ENCODE measurements at regions of chr12 and their contacts with region 1.

Region 1: DNA sequence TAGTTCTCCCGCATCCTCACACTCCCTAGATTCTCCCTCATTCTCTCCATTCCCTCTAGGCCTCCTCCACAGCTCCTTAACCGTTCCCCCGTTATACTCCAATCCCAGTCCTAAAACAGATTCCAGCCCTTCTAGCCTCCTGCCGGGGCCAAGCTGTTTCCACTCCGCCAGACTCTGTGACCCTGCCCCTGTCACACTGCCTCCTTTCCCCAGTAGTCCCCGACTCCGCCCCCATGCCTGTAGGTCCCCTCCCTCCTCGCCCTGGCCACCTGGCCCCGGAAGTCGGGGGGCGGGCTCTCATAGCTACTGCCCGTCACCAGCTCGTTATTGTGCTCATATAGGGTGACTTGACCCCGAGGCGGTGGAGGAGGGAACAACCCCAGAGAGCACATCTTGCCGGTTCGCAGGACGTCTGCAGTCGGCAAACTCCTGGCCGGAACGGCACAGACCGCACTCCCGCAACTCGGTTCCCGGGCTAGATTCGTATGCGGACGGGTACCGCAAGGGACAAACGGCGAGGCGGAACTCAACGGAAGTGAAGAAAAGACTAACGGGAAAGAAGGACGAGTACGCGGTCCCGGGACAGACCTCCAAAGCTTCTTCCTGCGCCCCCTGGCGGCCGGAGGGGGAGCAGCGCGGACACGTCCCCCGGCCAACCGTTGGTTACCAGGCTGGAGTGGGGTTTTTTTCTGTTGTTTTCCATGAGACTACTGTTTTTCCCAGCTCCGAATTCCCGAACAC is at the start of gene AAAS:
- DNase-seq: peak; percentile 76 to 98
- H3K4me3 ChIP-seq: peak within 1 kb of the TSS; percentile 71 to 97 (median 94)
- H3K27ac ChIP-seq: peak within 1 kb of the TSS; percentile 95
- H3K4me1 ChIP-seq: peaks cover 0 to 13% (median 9%) of the 10 kb centered on the region in 4 experiments; a peak in 5 of 7 replicates
- H3K27me3 ChIP-seq: peaks cover 1 to 30% (median 23%) of the 10 kb centered on the region in 4 experiments
- CTCF ChIP-seq: peak; percentile 85 to 99 (median 98)
- EP300 ChIP-seq: no peak
- POLR2A ChIP-seq: peak; percentile 86 to 93
- RAD21 ChIP-seq: peak; percentile 21 to 48; a peak in 2 of 4 replicates
- total RNA-seq, gene AAAS: 66.1 and 68.2 TPM in 2 replicates

Region 2: DNA sequence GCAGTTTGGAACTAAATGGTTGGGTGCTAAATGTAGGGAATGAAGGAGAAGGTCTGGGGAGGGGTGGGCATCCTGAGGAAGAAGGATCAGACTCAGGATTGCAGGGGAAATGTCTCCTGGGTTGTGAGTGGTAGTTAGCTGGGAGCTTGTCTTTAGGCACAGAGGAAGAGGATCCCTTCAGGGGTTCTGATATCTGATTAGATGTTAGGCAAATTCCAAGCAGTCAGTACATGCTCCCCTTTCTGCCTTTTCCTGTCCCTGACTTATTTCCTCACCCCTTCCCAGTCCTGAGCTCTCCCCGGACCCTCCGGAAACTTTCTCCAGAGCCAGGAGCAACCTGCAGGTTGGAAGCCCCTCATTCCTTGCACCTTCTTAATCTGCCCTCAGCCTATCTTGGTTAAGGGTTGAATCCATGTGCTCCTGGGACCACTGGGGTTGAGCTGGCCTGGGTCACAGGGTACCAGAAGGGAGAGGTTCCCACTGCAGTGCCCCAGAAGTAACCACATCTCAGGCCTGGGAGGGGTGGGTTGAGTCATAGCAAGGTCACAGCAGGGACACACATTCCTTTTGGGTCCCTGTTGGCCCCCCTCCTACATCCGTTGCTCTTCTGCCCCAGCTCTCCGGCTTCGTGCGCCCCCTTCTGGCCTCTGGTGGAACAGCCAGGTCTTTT is 222.1 kb before region 1 on chr12:
- CTCF ChIA-PET with region 1: no interaction called
- POLR2A ChIA-PET with region 1: no interaction called
- DNase-seq: peak; percentile 65 to 97
- H3K4me3 ChIP-seq: peak overlapping the region in 2 of 4 experiments; percentile 5 to 85; a peak in 3 of 8 replicates
- H3K27ac ChIP-seq: no peak overlapping the region
- H3K4me1 ChIP-seq: peaks cover 4 to 21% (median 7%) of the 10 kb centered on the region in 4 experiments
- H3K27me3 ChIP-seq: peaks cover 0 to 25% (median 15%) of the 10 kb centered on the region in 4 experiments; a peak in 5 of 7 replicates
- CTCF ChIP-seq: peak; percentile 82 to 87 (median 86)
- EP300 ChIP-seq: no peak
- POLR2A ChIP-seq: no peak
- RAD21 ChIP-seq: peak; percentile 79 to 81

Region 3: GRCh38 chr12:53287741-53288216 is 33.5 kb before region 1 on chr12:
- CTCF ChIA-PET with region 1: interaction called, 23 read pairs
- POLR2A ChIA-PET with region 1: interaction called, 4 read pairs
- DNase-seq: peak in 1 of 2 experiments; percentile 81
- H3K4me3 ChIP-seq: no peak overlapping the region
- H3K27ac ChIP-seq: no peak overlapping the region
- H3K4me1 ChIP-seq: no peaks in the 10 kb centered on the region
- H3K27me3 ChIP-seq: no peaks in the 10 kb centered on the region
- CTCF ChIP-seq: peak; percentile 80 to 86 (median 85)
- EP300 ChIP-seq: no peak
- POLR2A ChIP-seq: no peak
- RAD21 ChIP-seq: peak; percentile 74 to 81

Region 4: DNA sequence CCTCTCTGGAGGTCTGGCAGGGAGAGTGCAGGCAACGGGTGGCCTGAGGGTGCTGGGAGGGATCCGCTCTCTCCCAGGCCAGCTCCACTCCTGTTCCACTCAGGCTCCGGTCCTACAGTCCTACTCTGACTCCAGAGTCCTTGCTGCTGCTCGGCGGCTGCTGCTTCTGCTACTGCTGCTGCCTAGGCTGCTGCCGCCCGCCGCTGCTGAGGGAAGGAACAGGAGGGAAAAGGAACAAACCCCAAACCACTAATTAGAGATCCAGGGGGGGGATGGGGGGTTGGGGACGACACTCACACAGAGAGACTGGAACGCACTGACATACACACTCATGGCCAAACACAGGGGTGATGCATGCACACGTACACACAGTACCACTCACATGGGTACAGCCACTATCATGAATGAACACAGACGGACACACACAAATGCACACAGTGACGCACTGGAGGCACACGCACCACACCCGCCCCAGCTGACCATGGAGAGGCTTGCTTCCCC is 15.0 kb after region 1 on chr12 and contains the start of gene SP7:
- CTCF ChIA-PET with region 1: interaction called, 17 read pairs
- POLR2A ChIA-PET with region 1: interaction called, 19 read pairs
- DNase-seq: no peak
- H3K4me3 ChIP-seq: no peak within 1 kb of the TSS
- H3K27ac ChIP-seq: no peak within 1 kb of the TSS
- H3K4me1 ChIP-seq: peaks cover 0 to 22% (median 1%) of the 10 kb centered on the region in 4 experiments; a peak in 4 of 7 replicates
- H3K27me3 ChIP-seq: peaks cover 0 to 12% (median 5%) of the 10 kb centered on the region in 4 experiments; a peak in 3 of 7 replicates
- CTCF ChIP-seq: no peak
- EP300 ChIP-seq: no peak
- POLR2A ChIP-seq: no peak
- RAD21 ChIP-seq: no peak
- total RNA-seq, gene SP7: 0.13 TPM in 1 of 2 replicates, not detected in the other

Region 5: GRCh38 chr12:53391729-53392128 is 70.5 kb after region 1 on chr12:
- CTCF ChIA-PET with region 1: interaction called, 14 read pairs
- POLR2A ChIA-PET with region 1: interaction called, 4 read pairs
- DNase-seq: no peak
- H3K4me3 ChIP-seq: no peak overlapping the region
- H3K27ac ChIP-seq: no peak overlapping the region
- H3K4me1 ChIP-seq: no peaks in the 10 kb centered on the region
- H3K27me3 ChIP-seq: no peaks in the 10 kb centered on the region
- CTCF ChIP-seq: no peak
- EP300 ChIP-seq: no peak
- POLR2A ChIP-seq: no peak
- RAD21 ChIP-seq: no peak

Region 6: GRCh38 chr12:53481957-53482586 is 160.8 kb after region 1 on chr12:
- CTCF ChIA-PET with region 1: interaction called, 12 read pairs
- POLR2A ChIA-PET with region 1: interaction called, 22 read pairs
- DNase-seq: no peak
- H3K4me3 ChIP-seq: no peak overlapping the region
- H3K27ac ChIP-seq: no peak overlapping the region
- H3K4me1 ChIP-seq: peaks cover 0 to 5% (median 1%) of the 10 kb centered on the region in 4 experiments; a peak in 4 of 7 replicates
- H3K27me3 ChIP-seq: no peaks in the 10 kb centered on the region
- CTCF ChIP-seq: peak; percentile 26 to 73 (median 46)
- EP300 ChIP-seq: no peak
- POLR2A ChIP-seq: peak; percentile 14 to 22; a peak in 2 of 3 replicates
- RAD21 ChIP-seq: peak; percentile 39 to 40; a peak in 3 of 4 replicates

Region 7: GRCh38 chr12:53575502-53576253 is 254.4 kb after region 1 on chr12:
- CTCF ChIA-PET with region 1: no interaction called
- POLR2A ChIA-PET with region 1: no interaction called
- DNase-seq: no peak
- H3K4me3 ChIP-seq: no peak overlapping the region
- H3K27ac ChIP-seq: no peak overlapping the region
- H3K4me1 ChIP-seq: no peaks in the 10 kb centered on the region
- H3K27me3 ChIP-seq: no peaks in the 10 kb centered on the region
- CTCF ChIP-seq: no peak
- EP300 ChIP-seq: no peak
- POLR2A ChIP-seq: no peak
- RAD21 ChIP-seq: no peak